AG04450 (cell line): ENCODE measurements at regions of chr14 and their contacts with region 1.

Region 1: DNA sequence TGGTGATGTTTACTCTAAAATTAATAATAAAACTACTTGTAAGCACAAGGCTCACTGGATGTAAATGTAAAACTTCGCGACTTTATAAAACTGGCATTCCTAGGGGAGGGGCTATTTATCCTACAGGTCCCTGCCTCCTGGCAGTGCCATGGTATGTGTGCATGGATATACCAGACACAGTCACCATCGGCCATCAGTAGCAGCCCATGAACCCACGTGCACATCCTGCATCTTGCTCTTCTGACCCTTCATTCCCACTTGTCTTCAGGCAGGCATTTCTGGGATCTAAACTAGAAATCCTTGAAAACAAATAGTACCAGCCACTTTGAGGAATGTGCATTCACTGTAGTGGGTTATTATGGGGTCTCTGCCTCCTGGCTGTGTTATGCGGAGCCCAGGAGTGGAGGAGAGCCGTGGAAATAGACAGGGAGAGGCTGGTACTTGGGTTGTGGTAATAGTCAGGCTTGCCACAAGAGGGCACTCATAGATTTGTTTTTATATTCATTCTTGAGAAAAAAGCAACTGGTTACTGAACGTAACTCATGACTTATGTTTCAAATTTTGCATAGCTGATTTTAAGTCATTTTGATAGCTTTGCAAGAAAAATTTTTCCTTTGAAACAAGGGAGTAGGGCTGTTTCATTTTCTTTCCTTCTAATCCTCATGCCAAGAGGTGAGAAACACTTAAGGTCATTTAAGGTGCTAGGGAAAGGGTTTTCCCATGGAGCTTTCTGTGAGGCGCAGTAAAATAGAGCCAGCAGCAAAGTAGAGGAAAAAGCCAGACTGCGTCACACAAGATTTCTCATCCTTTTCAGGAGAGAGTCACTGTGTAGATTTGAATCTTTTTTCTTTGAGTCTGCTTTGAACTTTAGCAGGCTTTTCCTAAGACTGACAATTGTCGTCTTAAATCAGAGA is 17.4 kb upstream of the GALNT16 start:
- DNase-seq: peak; percentile 39
- H3K4me3 ChIP-seq: no peak overlapping the region
- H3K27ac ChIP-seq: no peak overlapping the region
- H3K27me3 ChIP-seq: no peaks in the 10 kb centered on the region
- CTCF ChIP-seq: peak; percentile 76

Region 2: DNA sequence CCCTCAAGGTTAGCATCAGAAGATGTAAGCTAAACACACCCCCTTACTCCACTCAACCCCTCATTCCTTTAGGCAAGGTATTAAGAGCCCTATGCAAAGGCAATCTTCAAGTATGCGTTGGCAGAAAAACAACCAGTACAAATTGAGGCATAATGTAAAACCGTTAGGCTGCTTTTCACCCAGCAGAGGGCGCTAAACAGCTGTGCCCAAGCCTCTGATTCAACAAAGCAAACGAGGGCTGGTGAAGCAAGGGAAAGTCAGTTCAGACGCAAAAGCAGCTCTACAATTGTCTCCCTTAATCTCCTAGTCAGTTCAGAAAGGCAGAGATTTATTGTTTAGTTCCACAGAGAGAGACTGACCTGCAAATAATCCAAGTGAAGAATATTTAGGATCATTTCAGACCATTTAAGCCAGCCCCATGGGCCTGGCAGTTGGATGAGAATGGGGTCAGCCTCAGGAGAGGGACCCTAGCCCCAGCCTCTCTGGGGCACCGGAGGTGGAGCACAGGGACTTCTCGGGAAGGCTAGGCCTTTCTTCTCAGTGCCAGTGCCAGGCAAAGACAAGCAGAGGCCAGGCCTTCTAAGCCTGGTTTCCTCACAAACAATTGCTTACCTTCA is 113.2 kb before region 1 on chr14:
- CTCF ChIA-PET with region 1: interaction called, 19 read pairs
- POLR2A ChIA-PET with region 1: no interaction called
- DNase-seq: peak; percentile 71
- H3K4me3 ChIP-seq: no peak overlapping the region
- H3K27ac ChIP-seq: peak overlapping the region; percentile 22
- H3K27me3 ChIP-seq: no peaks in the 10 kb centered on the region
- CTCF ChIP-seq: peak; percentile 97

Region 3: GRCh38 chr14:69231462-69231861 is 11.1 kb before region 1 on chr14:
- CTCF ChIA-PET with region 1: interaction called, 18 read pairs
- POLR2A ChIA-PET with region 1: no interaction called
- DNase-seq: no peak
- H3K4me3 ChIP-seq: no peak overlapping the region
- H3K27ac ChIP-seq: no peak overlapping the region
- H3K27me3 ChIP-seq: no peaks in the 10 kb centered on the region
- CTCF ChIP-seq: no peak

Region 4: DNA sequence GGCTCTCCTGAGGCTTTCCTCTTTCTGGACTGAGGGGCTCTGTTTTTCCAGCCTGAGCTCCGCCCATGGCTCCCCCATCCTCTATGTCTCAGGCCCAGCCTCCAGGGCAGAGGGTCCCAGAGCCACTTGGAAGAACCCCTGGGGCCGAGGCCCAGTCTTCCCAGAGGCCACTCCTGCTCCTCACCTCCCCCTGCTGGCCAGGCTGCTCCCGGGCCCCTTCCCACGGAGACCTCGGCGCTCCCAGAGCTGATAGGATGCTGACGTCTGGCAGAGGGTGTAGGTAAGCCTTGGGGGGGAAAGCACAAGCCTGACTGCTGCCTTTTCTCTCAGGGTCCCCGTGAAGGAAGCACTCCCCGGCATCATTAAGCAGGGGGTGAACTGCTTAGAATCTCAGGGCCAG is 104.1 kb after region 1 on chr14:
- CTCF ChIA-PET with region 1: interaction called, 76 read pairs
- POLR2A ChIA-PET with region 1: no interaction called
- DNase-seq: no peak
- H3K4me3 ChIP-seq: no peak overlapping the region
- H3K27ac ChIP-seq: no peak overlapping the region
- H3K27me3 ChIP-seq: peaks cover 48% of the 10 kb centered on the region
- CTCF ChIP-seq: peak; percentile 75

Region 5: DNA sequence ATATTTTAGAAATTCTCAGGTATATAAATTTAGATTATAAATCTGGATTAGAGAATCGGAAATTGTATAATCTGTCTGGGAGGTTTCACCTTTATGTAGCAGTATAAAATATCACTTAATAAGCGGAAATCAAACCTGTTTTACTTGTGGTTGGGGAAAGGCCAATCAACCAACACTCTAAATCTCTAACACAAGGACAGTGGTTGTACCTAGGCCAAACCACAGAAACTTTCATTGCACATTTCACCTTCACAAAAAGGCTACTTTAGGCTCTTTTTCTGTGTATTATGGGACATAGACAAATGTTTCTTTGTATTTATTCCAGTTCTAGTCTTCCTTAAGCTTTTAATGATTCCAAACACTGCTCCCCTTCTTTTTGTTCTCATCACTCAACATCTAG is 135.7 kb after region 1 on chr14:
- CTCF ChIA-PET with region 1: interaction called, 11 read pairs
- POLR2A ChIA-PET with region 1: no interaction called
- DNase-seq: no peak
- H3K4me3 ChIP-seq: no peak overlapping the region
- H3K27ac ChIP-seq: no peak overlapping the region
- H3K27me3 ChIP-seq: no peaks in the 10 kb centered on the region
- CTCF ChIP-seq: no peak